Heart right ventricle (tissue), 16 donors: ENCODE measurements at regions of chr11 and their contacts with region 1.

Region 1: GRCh38 chr11:108647701-108648527 is 17.0 kb upstream of the DDX10 start:
- DNase-seq: peak; percentile 56 to 83
- ATAC-seq: peak; percentile 86 to 96 (median 94)
- H3K4me3 ChIP-seq: peak overlapping the region in 2 of 10 donors; percentile 3 to 27
- H3K27ac ChIP-seq: peak overlapping the region; percentile 14 to 80 (median 64)
- H3K4me1 ChIP-seq: peaks cover 0 to 7% (median 0%) of the 10 kb centered on the region in 9 donors
- H3K27me3 ChIP-seq: no peaks in the 10 kb centered on the region
- CTCF ChIP-seq: peak; percentile 45 to 84 (median 74)

Region 2: GRCh38 chr11:108121274-108122155 is 526.4 kb before region 1 on chr11 and contains the start of gene ACAT1:
- intact Hi-C with region 1: loop called in 4 of 10 experiments (anchors 5 to 10 kb)
- DNase-seq: peak; percentile 98 to 99
- ATAC-seq: peak; percentile 95 to 97 (median 96)
- H3K4me3 ChIP-seq: peak within 1 kb of the TSS; percentile 59 to 90 (median 74)
- H3K27ac ChIP-seq: peak within 1 kb of the TSS; percentile 92 to 99 (median 96)
- H3K4me1 ChIP-seq: peaks cover 9 to 54% (median 38%) of the 10 kb centered on the region in 9 donors
- H3K27me3 ChIP-seq: no peaks in the 10 kb centered on the region
- CTCF ChIP-seq: peak in 8 of 9 donors; percentile 5 to 51 (median 38)
- total RNA-seq, gene ACAT1: 219 to 535 (median 412) TPM

Region 3: GRCh38 chr11:108414958-108415357 is 233.0 kb before region 1 on chr11:
- intact Hi-C with region 1: loop called in 5 of 10 experiments (anchors 5 to 10 kb)
- DNase-seq: no peak
- ATAC-seq: no peak
- H3K4me3 ChIP-seq: no peak overlapping the region
- H3K27ac ChIP-seq: no peak overlapping the region
- H3K4me1 ChIP-seq: no peaks in the 10 kb centered on the region
- H3K27me3 ChIP-seq: no peaks in the 10 kb centered on the region
- CTCF ChIP-seq: no peak

Region 4: GRCh38 chr11:108467091-108467823 is 180.7 kb before region 1 on chr11 and contains the start of gene C11orf65:
- intact Hi-C with region 1: loop called in 3 of 10 experiments (anchors 5 to 10 kb)
- DNase-seq: peak; percentile 94 to 97
- ATAC-seq: peak; percentile 99 to 100 (median 100)
- H3K4me3 ChIP-seq: peak within 1 kb of the TSS; percentile 51 to 74 (median 66)
- H3K27ac ChIP-seq: peak within 1 kb of the TSS; percentile 94 to 99 (median 98)
- H3K4me1 ChIP-seq: peaks cover 0 to 22% (median 8%) of the 10 kb centered on the region in 9 donors
- H3K27me3 ChIP-seq: no peaks in the 10 kb centered on the region
- CTCF ChIP-seq: no peak
- total RNA-seq, gene C11orf65: 0.39 to 1.6 (median 1.1) TPM in 9 of 10 donors, not detected in the other

Region 5: GRCh38 chr11:108593214-108593922 is 54.5 kb before region 1 on chr11 and contains the start of gene EXPH5:
- intact Hi-C with region 1: loop called in 2 of 10 experiments (anchors 5 to 10 kb)
- DNase-seq: peak; percentile 84 to 86
- ATAC-seq: peak; percentile 94 to 99 (median 98)
- H3K4me3 ChIP-seq: peak within 1 kb of the TSS; percentile 33 to 87 (median 64)
- H3K27ac ChIP-seq: no peak within 1 kb of the TSS
- H3K4me1 ChIP-seq: peaks cover 0 to 14% (median 5%) of the 10 kb centered on the region in 9 donors
- H3K27me3 ChIP-seq: peaks cover 0 to 34% (median 19%) of the 10 kb centered on the region in 7 donors
- CTCF ChIP-seq: no peak
- total RNA-seq, gene EXPH5: 0.77 to 8.4 (median 1.6) TPM